Right ventricle myocardium inferior (tissue), 1 donor: ENCODE measurements at regions of chr20 and their contacts with region 1.

Region 1: DNA sequence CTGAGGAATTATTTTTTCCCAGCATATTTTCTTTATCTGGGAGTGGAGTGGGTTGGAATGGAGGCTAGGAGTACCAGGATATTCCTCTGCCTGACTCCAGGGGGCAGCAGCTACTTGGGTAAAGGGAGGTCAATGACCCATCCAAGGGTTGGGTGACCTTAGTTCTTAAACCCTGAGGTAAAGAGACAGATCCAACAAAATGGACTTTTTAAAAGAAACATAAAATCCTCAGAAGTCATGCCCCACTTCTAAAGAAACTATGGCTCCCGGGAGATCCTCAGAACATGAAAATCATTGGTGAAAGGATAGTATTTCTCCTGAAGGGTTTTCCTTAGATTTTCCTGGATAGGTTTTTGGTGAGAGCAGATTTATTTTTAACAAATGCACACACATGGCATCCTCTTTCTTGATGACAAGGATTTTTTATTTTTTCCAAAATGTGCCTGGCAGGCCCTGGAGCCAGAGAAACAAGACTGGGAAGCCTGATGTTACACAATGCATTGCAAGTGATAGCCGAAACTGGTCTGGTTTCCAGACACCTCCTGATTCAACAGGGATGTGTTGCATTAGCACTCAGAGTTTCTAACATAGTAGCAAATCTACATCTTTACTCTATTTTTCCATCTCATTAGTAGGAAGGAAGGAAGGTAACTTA is 240.9 kb upstream of the BTBD3 start:
- DNase-seq: no peak
- ATAC-seq: peak; percentile 92

Region 2: DNA sequence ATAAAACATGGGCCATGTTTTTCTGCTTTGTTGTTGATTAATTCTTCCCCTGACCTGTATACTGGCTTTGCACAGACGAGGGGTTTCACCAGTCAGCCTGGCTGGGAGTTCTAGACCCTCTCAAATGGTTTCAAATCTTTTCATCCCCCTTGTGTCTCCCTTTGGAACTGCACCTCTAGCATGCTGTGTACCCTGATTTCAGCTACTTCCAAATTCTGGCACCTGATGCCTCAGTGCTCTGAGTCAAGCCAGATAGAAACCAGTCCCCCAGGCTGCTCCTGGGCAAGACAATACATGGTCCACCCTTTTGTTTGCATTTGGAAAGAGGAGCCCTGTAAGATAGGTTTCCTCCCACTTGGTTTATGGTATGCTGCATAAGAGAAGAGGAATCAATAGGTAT is 531.1 kb after region 1 on chr20:
- intact Hi-C with region 1: loop called (anchors 5 kb)
- DNase-seq: no peak
- ATAC-seq: no peak